Transverse colon (tissue), 4 donors: ENCODE measurements at regions of chr14 and their contacts with region 1.

Region 1: GRCh38 chr14:64123241-64123822 is 170.8 kb downstream of the ESR2 start:
- DNase-seq: no peak
- H3K4me3 ChIP-seq: no peak overlapping the region
- H3K27ac ChIP-seq: no peak overlapping the region
- H3K4me1 ChIP-seq: no peaks in the 10 kb centered on the region
- H3K27me3 ChIP-seq: no peaks in the 10 kb centered on the region
- CTCF ChIP-seq: no peak
- EP300 ChIP-seq: no peak
- POLR2A ChIP-seq: no peak

Region 2: GRCh38 chr14:63781686-63782085 is 341.6 kb before region 1 on chr14:
- in situ Hi-C with region 1: no loop called
- intact Hi-C with region 1: no loop called
- DNase-seq: no peak
- H3K4me3 ChIP-seq: no peak overlapping the region
- H3K27ac ChIP-seq: no peak overlapping the region
- H3K4me1 ChIP-seq: peaks cover 0 to 4% (median 0%) of the 10 kb centered on the region in 4 donors
- H3K27me3 ChIP-seq: no peaks in the 10 kb centered on the region
- CTCF ChIP-seq: no peak
- EP300 ChIP-seq: no peak
- POLR2A ChIP-seq: no peak

Region 3: DNA sequence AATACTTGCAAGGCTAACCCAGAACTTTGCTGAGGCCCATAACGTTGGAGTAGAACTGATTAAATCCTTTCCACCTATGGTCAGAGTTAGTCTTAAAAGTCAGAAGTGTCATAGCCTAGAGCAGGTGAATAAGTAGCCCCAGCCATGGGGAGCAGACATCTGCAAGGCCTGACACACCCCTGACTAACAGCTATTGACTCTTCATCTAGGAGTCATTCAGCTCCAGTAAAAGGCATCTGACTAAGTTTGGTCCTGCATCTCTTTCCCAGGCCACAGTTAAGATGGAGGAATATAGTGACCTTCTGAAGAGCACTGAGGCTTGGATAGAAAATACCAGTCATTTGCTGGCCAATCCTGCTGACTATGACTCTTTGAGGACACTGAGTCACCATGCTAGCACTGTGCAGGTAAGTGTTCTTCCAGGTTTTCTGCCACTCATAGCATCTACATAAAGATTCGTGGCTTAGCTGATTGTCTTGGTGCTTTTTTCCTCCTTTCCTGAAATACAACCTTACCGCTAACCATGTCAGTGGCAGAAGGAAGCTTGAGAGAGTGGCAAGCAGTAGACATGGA is 42.1 kb before region 1 on chr14:
- in situ Hi-C with region 1: no loop called
- intact Hi-C with region 1: loop called (anchors 1 kb)
- DNase-seq: no peak
- H3K4me3 ChIP-seq: no peak overlapping the region
- H3K27ac ChIP-seq: no peak overlapping the region
- H3K4me1 ChIP-seq: no peaks in the 10 kb centered on the region
- H3K27me3 ChIP-seq: no peaks in the 10 kb centered on the region
- CTCF ChIP-seq: no peak
- EP300 ChIP-seq: no peak
- POLR2A ChIP-seq: no peak

Region 4: DNA sequence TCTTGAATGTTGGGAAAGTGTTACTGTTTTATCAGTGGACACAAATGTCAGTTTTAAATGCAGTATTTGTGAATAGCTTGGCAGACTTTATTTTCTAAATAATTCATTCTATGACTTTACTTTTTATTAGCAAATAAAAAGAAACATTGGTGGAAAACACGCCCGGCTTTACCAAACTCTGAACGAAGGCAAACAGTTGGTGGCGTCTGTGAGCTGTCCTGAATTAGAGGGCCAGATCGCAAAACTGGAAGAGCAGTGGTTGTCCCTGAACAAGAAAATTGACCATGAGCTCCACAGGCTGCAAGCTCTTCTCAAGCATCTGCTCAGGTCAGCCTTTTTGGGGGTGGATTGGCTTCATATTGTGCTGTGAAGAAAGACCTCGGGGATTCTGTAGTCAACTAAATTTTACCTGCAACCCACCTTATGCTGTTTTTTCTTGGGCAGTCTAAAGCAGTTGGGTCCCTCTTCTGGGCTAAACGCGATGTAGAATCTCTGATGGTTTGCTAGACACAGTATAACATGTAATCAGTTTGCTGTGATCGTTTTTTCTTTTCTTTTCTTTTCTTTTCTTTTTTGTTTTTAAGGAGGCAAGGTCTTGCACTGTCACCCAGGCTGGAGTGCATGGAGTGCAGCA is 14.4 kb after region 1 on chr14:
- in situ Hi-C with region 1: no loop called
- intact Hi-C with region 1: no loop called
- DNase-seq: no peak
- H3K4me3 ChIP-seq: no peak overlapping the region
- H3K27ac ChIP-seq: no peak overlapping the region
- H3K4me1 ChIP-seq: no peaks in the 10 kb centered on the region
- H3K27me3 ChIP-seq: no peaks in the 10 kb centered on the region
- CTCF ChIP-seq: no peak
- EP300 ChIP-seq: no peak
- POLR2A ChIP-seq: no peak

Region 5: GRCh38 chr14:64363265-64363846 is 240.0 kb after region 1 on chr14:
- in situ Hi-C with region 1: no loop called
- intact Hi-C with region 1: no loop called
- DNase-seq: no peak
- H3K4me3 ChIP-seq: no peak overlapping the region
- H3K27ac ChIP-seq: no peak overlapping the region
- H3K4me1 ChIP-seq: no peaks in the 10 kb centered on the region
- H3K27me3 ChIP-seq: no peaks in the 10 kb centered on the region
- CTCF ChIP-seq: no peak
- EP300 ChIP-seq: no peak
- POLR2A ChIP-seq: no peak